ENCODE measurements at regions of chr6 and their contacts with region 1.

Region 1: DNA sequence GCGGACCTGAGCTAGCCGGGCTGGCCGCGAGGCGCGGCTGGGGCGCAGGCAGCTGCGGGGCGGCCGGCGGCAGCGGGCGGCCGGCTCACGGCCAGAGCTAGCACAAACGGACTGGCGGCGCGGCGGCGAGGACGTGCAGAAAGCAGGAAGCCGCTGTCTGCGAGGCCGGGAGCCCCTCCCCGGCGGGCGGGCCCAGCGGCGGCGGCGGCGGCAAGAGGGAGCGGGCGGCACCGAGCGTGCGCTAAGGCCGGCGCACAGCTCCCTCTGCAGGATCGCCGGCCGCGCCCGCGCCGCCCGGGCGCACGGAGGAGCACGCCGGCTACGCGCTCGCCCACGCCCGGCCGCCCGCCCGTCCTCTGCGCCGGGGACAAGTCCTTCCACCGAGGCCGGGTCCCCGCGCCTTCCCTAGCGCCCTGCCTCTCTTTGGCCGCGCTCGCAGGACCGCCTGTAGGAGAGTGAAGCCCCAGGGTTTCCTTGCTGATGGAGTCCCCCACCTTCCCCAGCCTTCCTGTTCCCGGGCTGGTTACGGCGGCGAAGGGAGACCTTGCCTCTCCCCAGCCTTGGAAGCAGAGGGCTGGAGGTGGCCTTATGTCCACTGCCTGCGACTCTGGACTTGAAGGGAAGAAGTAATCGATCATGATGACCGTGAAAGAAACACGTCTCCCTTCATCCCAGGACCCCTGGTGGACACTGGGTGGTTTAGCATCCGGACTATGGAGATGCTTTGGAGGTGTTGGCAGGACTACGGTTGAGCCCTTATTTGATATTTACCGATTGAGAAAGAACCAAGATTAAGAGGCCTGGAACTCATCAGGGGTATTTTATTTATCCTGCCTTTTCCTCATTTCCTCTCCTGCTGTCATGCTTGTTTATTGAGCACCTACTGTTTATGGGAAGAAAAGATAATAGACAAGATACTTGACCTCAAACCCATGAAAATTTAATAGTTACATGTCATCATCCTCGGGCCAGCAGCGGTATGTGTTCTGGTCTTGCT is at the start of gene PREP:
- DNase-seq: peak; percentile 82 to 92
- H3K4me3 ChIP-seq: peak within 1 kb of the TSS; percentile 96
- H3K4me3 Mint-ChIP-seq: peak within 1 kb of the TSS; percentile 97
- H3K27ac Mint-ChIP-seq: peak within 1 kb of the TSS; percentile 91
- H3K4me1 ChIP-seq: peaks cover 17% of the 10 kb centered on the region
- H3K4me1 Mint-ChIP-seq: peaks cover 21% of the 10 kb centered on the region
- H3K27me3 ChIP-seq: no peaks in the 10 kb centered on the region
- H3K27me3 Mint-ChIP-seq: no peaks in the 10 kb centered on the region
- CTCF ChIP-seq: peak; percentile 81
- total RNA-seq, gene PREP: 66.5 and 69.9 TPM in 2 replicates

Region 2: DNA sequence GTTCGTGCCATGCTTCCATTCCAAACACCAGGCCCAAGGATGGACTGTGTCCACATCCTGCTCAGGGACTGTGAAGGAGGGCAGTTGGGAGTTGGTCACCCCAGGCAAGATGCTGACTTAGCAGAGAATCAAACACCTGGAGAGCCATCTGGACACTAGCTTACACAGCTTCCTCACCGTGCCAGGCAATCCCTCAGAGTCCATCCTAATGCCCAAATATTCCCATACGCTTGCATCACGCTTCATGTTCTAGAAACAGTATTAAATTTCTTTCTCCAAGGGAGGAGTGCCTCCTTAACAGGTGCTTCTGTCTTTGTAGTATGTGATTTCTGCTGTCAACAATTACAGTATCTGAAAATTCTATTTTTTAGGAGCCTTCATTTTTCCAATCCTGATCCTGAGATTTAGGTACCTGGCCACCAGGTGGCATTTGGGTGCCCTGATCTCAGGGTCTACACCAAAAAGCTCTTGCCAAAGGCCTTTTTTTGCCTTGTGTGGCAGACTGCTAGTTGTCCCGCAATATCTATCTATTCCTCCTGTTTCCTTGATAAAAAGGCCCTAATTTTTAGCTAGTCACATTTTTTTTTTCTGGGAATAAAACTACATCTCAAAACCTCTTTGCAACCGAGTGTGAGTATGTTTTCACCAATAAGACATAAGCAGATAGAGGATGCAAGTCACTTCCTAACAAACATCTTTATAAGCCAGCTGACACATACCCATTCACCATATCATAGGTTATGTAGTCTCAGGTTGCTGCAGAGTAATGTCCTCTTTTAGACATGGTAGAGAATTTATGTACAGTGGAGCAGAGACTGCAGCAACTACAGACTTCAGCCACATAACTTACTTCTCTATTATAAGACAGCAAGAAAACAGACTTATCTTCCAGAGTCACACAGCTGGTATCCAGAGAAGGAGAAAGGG is 85.4 kb before region 1 on chr6:
- CTCF ChIA-PET with region 1: interaction called, 4 read pairs
- POLR2A ChIA-PET with region 1: no interaction called
- intact Hi-C with region 1: loop called (anchors 1 kb)
- DNase-seq: peak in 1 of 2 experiments; percentile 42
- H3K4me3 ChIP-seq: no peak overlapping the region
- H3K4me3 Mint-ChIP-seq: no peak overlapping the region
- H3K27ac Mint-ChIP-seq: peak overlapping the region; percentile 34
- H3K4me1 ChIP-seq: no peaks in the 10 kb centered on the region
- H3K4me1 Mint-ChIP-seq: no peaks in the 10 kb centered on the region
- H3K27me3 ChIP-seq: no peaks in the 10 kb centered on the region
- H3K27me3 Mint-ChIP-seq: no peaks in the 10 kb centered on the region
- CTCF ChIP-seq: peak; percentile 60 to 66

Region 3: DNA sequence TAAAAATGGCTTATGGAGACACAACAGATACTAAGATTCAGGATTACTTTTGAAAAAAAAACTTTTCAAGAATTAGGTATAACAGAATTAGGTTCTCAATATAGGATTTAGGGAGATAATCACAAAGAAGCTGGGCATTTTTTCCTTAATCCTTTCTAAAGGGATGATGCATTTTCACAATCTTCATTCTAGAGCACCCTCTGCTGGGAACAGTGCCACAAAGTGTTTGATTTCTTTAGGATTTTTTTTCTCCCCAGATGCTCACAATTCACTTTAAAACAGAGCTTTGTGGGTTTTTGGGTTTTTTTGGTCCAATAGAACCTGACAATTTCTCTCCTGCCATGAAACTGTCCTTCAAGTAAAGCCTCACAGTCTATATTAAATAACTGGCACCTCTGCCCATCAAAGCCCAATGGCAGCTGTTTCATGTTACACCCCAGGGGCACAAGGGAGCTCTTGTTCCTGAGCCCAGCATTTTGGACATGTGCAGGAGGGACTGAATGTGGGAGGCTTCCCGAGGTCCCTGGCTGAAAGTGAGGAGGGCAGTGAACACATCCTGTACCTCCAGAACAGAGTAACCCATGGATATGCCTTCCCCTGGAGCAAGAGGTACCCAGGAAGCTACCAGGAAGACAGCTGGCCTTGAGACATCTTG is 40.0 kb before region 1 on chr6:
- CTCF ChIA-PET with region 1: interaction called, 6 read pairs
- POLR2A ChIA-PET with region 1: no interaction called
- intact Hi-C with region 1: loop called (anchors 2 kb)
- DNase-seq: no peak
- H3K4me3 ChIP-seq: no peak overlapping the region
- H3K4me3 Mint-ChIP-seq: no peak overlapping the region
- H3K27ac Mint-ChIP-seq: no peak overlapping the region
- H3K4me1 ChIP-seq: no peaks in the 10 kb centered on the region
- H3K4me1 Mint-ChIP-seq: peaks cover 6% of the 10 kb centered on the region
- H3K27me3 ChIP-seq: no peaks in the 10 kb centered on the region
- H3K27me3 Mint-ChIP-seq: no peaks in the 10 kb centered on the region
- CTCF ChIP-seq: peak in 1 of 2 experiments; percentile 16

Region 4: DNA sequence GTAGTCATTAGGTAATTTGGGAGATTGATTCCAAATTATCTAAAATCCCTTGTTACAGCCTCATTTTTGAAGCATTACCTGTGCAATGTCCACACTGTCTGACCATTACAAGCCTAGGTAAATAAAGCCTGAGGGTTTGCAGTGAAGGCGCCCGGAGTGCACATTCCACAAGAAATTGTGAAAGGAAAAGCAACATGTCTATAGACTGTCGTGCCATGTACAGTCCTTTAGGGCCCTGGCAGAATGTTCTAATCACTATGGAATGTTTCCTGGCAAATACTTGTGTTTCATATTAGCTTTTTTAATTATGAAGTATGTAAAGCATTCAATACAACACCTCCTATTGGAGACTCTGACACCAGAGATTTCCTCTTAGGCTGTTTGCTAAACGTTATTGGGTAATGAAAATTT is 29.2 kb before region 1 on chr6:
- CTCF ChIA-PET with region 1: interaction called, 10 read pairs
- POLR2A ChIA-PET with region 1: interaction called, 6 read pairs
- intact Hi-C with region 1: loop called (anchors 1 kb)
- DNase-seq: peak; percentile 85 to 88
- H3K4me3 ChIP-seq: no peak overlapping the region
- H3K4me3 Mint-ChIP-seq: no peak overlapping the region
- H3K27ac Mint-ChIP-seq: peak overlapping the region; percentile 82
- H3K4me1 ChIP-seq: peaks cover 44% of the 10 kb centered on the region
- H3K4me1 Mint-ChIP-seq: peaks cover 26% of the 10 kb centered on the region
- H3K27me3 ChIP-seq: no peaks in the 10 kb centered on the region
- H3K27me3 Mint-ChIP-seq: no peaks in the 10 kb centered on the region
- CTCF ChIP-seq: no peak

Region 5: GRCh38 chr6:105380634-105381033 is 22.6 kb before region 1 on chr6:
- CTCF ChIA-PET with region 1: interaction called, 7 read pairs
- POLR2A ChIA-PET with region 1: no interaction called
- intact Hi-C with region 1: loop called (anchors 2 kb)
- DNase-seq: peak in 1 of 2 experiments; percentile 22
- H3K4me3 ChIP-seq: no peak overlapping the region
- H3K4me3 Mint-ChIP-seq: no peak overlapping the region
- H3K27ac Mint-ChIP-seq: peak overlapping the region; percentile 9
- H3K4me1 ChIP-seq: peaks cover 54% of the 10 kb centered on the region
- H3K4me1 Mint-ChIP-seq: peaks cover 44% of the 10 kb centered on the region
- H3K27me3 ChIP-seq: no peaks in the 10 kb centered on the region
- H3K27me3 Mint-ChIP-seq: no peaks in the 10 kb centered on the region
- CTCF ChIP-seq: no peak